ENCODE measurements at regions of chr3 and their contacts with region 1.

Region 1: DNA sequence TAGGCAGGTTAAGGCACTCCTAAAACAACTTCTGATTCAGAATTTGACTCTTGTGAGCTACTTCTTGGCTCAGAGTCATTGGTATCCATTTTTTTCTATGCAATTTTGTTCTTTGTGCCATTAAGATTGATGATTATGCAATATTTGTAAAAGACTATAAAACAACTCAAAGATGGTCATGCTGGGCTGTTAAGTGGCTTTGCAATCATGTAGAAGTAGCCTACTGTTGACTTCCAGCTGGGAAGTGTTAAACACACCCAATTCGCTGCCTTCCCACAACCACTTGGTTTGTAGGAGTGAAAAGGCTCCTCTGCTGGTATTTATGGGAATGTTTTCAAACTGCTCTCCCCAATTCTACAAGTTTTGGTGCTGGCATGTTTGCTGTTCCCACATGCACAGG is 74.7 kb upstream of the COL6A6 start:
- DNase-seq: no peak

Region 2: GRCh38 chr3:129992781-129993180 is 449.5 kb before region 1 on chr3:
- intact Hi-C with region 1: loop called in 1 of 2 experiments (anchors 5 kb)
- DNase-seq: no peak

Region 3: DNA sequence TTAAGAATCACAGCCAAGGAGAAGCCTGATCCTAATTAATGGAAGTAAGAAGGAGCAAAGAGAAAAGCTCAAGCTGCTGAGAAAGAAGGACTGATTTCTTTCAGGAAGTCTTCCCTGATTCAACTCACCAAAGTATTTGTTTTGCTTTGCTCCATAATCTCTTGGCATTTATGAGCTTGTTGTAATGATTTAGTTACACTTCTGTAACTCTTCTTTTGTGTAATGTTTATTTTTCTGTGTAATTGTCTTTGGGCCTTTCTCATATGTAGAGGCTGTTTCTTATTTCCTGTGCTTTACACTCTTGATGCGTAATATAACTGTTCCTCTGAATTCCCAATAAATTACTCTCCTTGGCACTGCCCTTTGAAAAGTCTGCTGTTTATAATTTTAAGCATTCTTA is 16.8 kb before region 1 on chr3:
- intact Hi-C with region 1: no loop called
- DNase-seq: no peak

Region 4: DNA sequence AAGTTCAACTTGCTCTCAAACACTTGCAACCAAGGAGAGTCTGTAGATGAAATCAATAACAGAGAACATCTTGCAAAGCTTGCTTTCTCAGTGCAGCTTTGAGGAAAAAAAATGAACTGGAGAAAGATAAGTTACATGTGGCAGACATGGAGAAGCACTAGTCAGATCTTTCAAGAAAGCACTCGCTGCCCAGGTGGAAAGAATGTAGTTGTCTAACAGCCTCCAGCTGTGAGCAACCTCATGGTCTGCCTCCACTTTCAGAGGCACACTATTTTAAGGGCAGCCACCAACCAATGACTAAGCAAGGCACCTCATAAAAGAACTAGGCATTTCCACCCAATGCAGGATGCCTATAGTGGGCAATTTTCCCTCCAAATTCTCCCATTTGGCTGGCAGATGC is 1717.9 kb after region 1 on chr3:
- intact Hi-C with region 1: no loop called
- DNase-seq: no peak